GM12878 (cell line): ENCODE measurements at regions of chr16 and their contacts with region 1.

Region 1: GRCh38 chr16:75471723-75472633 is 7.5 kb upstream of the TMEM170A start:
- DNase-seq: no peak
- ATAC-seq: peak; percentile 94
- H3K4me3 ChIP-seq: no peak overlapping the region
- H3K27ac ChIP-seq: no peak overlapping the region
- H3K4me1 ChIP-seq: no peaks in the 10 kb centered on the region
- H3K27me3 ChIP-seq: no peaks in the 10 kb centered on the region
- CTCF ChIP-seq: peak; percentile 74 to 85 (median 80)
- EP300 ChIP-seq: no peak
- POLR2A ChIP-seq: no peak
- RAD21 ChIP-seq: peak; percentile 86

Region 2: GRCh38 chr16:75333721-75334163 is 138.2 kb before region 1 on chr16:
- CTCF ChIA-PET with region 1: no interaction called
- POLR2A ChIA-PET with region 1: no interaction called
- RAD21 ChIA-PET with region 1: no interaction called
- SMC1A ChIA-PET with region 1: no interaction called
- in situ Hi-C with region 1: no loop called
- intact Hi-C with region 1: no loop called
- DNase-seq: peak; percentile 19
- ATAC-seq: peak; percentile 42; the same call in 2 of the 3 replicates
- H3K4me3 ChIP-seq: no peak overlapping the region
- H3K27ac ChIP-seq: no peak overlapping the region
- H3K4me1 ChIP-seq: peaks cover 12% of the 10 kb centered on the region
- H3K27me3 ChIP-seq: no peaks in the 10 kb centered on the region
- CTCF ChIP-seq: no peak
- EP300 ChIP-seq: no peak
- POLR2A ChIP-seq: no peak
- RAD21 ChIP-seq: no peak

Region 3: GRCh38 chr16:75486676-75487313 is 14.8 kb after region 1 on chr16:
- CTCF ChIA-PET with region 1: interaction called, 20 read pairs
- POLR2A ChIA-PET with region 1: interaction called, 3 read pairs
- RAD21 ChIA-PET with region 1: interaction called, 19 read pairs
- SMC1A ChIA-PET with region 1: interaction called, 13 read pairs
- in situ Hi-C with region 1: no loop called
- intact Hi-C with region 1: no loop called
- DNase-seq: peak; percentile 45
- ATAC-seq: peak; percentile 83
- H3K4me3 ChIP-seq: no peak overlapping the region
- H3K27ac ChIP-seq: peak overlapping the region; percentile 74
- H3K4me1 ChIP-seq: peaks cover 41% of the 10 kb centered on the region
- H3K27me3 ChIP-seq: no peaks in the 10 kb centered on the region
- CTCF ChIP-seq: no peak
- EP300 ChIP-seq: no peak
- POLR2A ChIP-seq: no peak
- RAD21 ChIP-seq: no peak

Region 4: GRCh38 chr16:75491876-75492275 is 19.9 kb after region 1 on chr16:
- CTCF ChIA-PET with region 1: interaction called, 20 read pairs
- POLR2A ChIA-PET with region 1: no interaction called
- RAD21 ChIA-PET with region 1: interaction called, 19 read pairs
- SMC1A ChIA-PET with region 1: interaction called, 13 read pairs
- in situ Hi-C with region 1: no loop called
- intact Hi-C with region 1: no loop called
- DNase-seq: no peak
- ATAC-seq: peak; percentile 64
- H3K4me3 ChIP-seq: no peak overlapping the region
- H3K27ac ChIP-seq: no peak overlapping the region
- H3K4me1 ChIP-seq: peaks cover 29% of the 10 kb centered on the region
- H3K27me3 ChIP-seq: no peaks in the 10 kb centered on the region; a peak in 1 of 4 replicates
- CTCF ChIP-seq: peak; percentile 24 to 49 (median 41); a peak in 5 of 6 replicates
- EP300 ChIP-seq: no peak
- POLR2A ChIP-seq: no peak
- RAD21 ChIP-seq: peak; percentile 42

Region 5: DNA sequence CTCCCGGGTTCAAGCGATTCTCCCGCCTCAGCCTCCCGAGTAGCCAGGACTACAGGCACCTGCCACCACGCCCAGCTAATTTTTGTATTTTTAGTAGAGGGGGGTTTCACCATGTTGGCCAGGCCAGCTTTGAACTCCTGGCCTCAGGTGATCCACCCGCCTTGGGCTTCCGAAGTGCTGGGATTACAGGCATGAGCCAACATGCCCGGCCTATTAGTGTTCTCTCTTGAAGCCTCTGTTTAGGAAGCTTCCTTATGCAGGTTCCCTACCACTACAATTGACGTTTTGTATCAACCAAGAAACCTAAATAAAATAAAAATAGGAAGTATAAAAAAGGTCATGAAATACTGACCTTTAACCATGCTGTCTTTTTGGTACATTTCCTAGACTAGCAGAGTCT is 47.9 kb after region 1 on chr16:
- CTCF ChIA-PET with region 1: interaction called, 95 read pairs
- POLR2A ChIA-PET with region 1: interaction called, 6 read pairs
- RAD21 ChIA-PET with region 1: interaction called, 12 read pairs
- SMC1A ChIA-PET with region 1: interaction called, 39 read pairs
- in situ Hi-C with region 1: no loop called
- intact Hi-C with region 1: loop called (anchors 1 kb)
- DNase-seq: no peak
- ATAC-seq: no peak
- H3K4me3 ChIP-seq: no peak overlapping the region
- H3K27ac ChIP-seq: no peak overlapping the region
- H3K4me1 ChIP-seq: no peaks in the 10 kb centered on the region
- H3K27me3 ChIP-seq: no peaks in the 10 kb centered on the region
- CTCF ChIP-seq: no peak
- EP300 ChIP-seq: no peak
- POLR2A ChIP-seq: no peak
- RAD21 ChIP-seq: no peak

Region 6: GRCh38 chr16:75527825-75528299 is 55.9 kb after region 1 on chr16:
- CTCF ChIA-PET with region 1: no interaction called
- POLR2A ChIA-PET with region 1: interaction called, 3 read pairs
- RAD21 ChIA-PET with region 1: interaction called, 9 read pairs
- SMC1A ChIA-PET with region 1: interaction called, 12 read pairs
- in situ Hi-C with region 1: no loop called
- intact Hi-C with region 1: no loop called
- DNase-seq: no peak
- ATAC-seq: peak; percentile 52
- H3K4me3 ChIP-seq: no peak overlapping the region
- H3K27ac ChIP-seq: no peak overlapping the region
- H3K4me1 ChIP-seq: no peaks in the 10 kb centered on the region
- H3K27me3 ChIP-seq: no peaks in the 10 kb centered on the region
- CTCF ChIP-seq: no peak
- EP300 ChIP-seq: no peak
- POLR2A ChIP-seq: no peak
- RAD21 ChIP-seq: no peak

Region 7: GRCh38 chr16:75550211-75550662 is 78.3 kb after region 1 on chr16:
- CTCF ChIA-PET with region 1: interaction called, 55 read pairs
- POLR2A ChIA-PET with region 1: no interaction called
- RAD21 ChIA-PET with region 1: interaction called, 19 read pairs
- SMC1A ChIA-PET with region 1: interaction called, 24 read pairs
- in situ Hi-C with region 1: no loop called
- intact Hi-C with region 1: no loop called
- DNase-seq: peak; percentile 69
- ATAC-seq: peak; percentile 89
- H3K4me3 ChIP-seq: no peak overlapping the region
- H3K27ac ChIP-seq: no peak overlapping the region
- H3K4me1 ChIP-seq: peaks cover 8% of the 10 kb centered on the region
- H3K27me3 ChIP-seq: no peaks in the 10 kb centered on the region
- CTCF ChIP-seq: peak; percentile 70 to 78 (median 77)
- EP300 ChIP-seq: no peak
- POLR2A ChIP-seq: no peak
- RAD21 ChIP-seq: peak; percentile 85